ENCODE measurements at regions of chr11 and their contacts with region 1.

Region 1: GRCh38 chr11:120295084-120295483 is 30.0 kb upstream of the TLCD5 start:
- DNase-seq: peak; percentile 48

Region 2: GRCh38 chr11:120235024-120235861 is 59.8 kb before region 1 on chr11:
- intact Hi-C with region 1: loop called (anchors 5 kb)
- DNase-seq: no peak

Region 3: GRCh38 chr11:120254788-120255518 is 40.1 kb before region 1 on chr11:
- intact Hi-C with region 1: loop called in 1 of 2 experiments (anchors 5 kb)
- DNase-seq: no peak

Region 4: DNA sequence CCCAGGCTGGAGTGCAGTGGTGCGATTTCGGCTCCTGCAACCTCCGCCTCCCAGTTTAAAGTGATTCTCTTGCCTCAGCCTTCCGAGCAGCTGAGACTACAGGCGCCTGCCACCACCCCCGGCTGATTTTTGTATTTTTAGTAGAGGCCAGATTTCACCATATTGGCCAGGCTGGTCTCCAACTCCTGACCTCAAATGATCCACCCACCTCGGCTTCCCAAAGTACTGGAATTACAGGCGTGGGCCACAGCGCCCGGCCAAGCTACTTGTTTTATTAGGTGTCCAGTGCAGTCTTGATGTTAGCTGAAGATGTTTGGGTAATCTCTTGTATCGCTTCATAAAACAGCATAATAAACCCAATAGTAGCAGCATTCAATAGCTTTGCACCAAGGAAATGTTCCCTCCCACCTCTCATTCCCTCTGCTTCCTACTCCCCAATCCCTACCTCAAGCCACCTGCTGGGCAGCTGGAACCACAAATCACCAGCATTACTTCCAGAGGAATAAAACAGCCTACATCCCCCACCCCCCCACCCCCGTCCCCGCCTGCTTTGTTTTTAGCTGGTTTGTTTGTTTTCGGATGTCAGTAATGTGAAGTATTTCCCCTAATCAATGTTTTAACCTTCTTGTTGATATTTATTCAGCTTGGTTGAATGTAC is 205.5 kb after region 1 on chr11:
- intact Hi-C with region 1: no loop called
- DNase-seq: no peak

Region 5: GRCh38 chr11:120527111-120527761 is 232.2 kb after region 1 on chr11:
- intact Hi-C with region 1: no loop called
- DNase-seq: peak; percentile 87

Measured in posterior vena cava (tissue), 2 donors.